Activated CD4-positive, alpha-beta T cell treated with anti-CD3 and anti-CD28 coated beads for 36 hours (primary cell): ENCODE measurements at regions of chr1 and their contacts with region 1.

Region 1: GRCh38 chr1:27044613-27045151 is 32.0 kb upstream of the TENT5B start:
- DNase-seq: peak; percentile 94
- ATAC-seq: peak; percentile 89
- H3K4me3 Mint-ChIP-seq: peak overlapping the region; percentile 65
- H3K27ac Mint-ChIP-seq: peak overlapping the region; percentile 60
- H3K4me1 Mint-ChIP-seq: peaks cover 20% of the 10 kb centered on the region
- H3K27me3 Mint-ChIP-seq: no peaks in the 10 kb centered on the region

Region 2: DNA sequence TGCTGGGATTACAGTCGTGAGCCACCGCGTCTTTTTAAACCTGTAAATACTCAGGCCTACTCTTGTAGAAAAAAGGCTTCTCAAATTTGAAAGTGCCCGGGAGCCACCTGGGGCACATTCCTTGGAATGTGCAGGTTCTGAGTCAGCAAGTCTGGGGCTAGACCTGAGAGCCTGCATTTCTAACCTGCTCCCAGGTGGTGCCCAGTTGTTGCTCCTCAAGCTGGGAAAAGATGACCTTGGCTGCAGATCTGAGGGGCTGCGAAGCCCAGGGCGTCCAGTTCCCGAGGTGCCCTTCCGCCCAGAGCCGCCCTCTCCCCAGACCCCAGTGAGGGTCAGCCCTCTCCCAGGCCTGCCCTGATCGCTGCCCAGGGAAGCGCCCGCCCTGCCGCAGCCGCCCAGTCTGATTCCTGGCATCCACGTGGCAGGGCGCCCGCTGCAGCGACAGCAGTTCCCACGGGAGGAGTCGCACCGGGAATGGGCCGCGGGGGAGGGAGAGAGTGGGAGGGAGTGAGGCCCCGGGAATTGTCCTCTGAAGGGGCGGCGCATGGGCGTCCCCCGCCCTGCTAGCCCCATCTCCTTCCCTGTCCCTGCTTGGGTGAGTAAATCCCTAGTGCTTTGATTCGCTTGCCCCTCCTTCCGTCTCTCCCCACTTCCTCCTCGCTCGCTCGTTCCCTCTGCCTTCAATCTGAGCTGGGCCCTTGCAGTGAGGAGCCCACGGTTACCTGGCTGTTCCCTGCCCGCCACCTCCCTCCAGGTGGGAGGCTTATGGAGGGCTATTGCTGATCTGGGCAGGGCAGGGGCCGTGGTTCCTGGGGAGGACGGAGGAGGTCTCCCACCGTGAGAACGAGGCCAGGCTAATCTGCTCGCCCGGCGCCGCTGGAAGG is 13.2 kb before region 1 on chr1:
- CTCF ChIA-PET with region 1: interaction called, 12 read pairs
- POLR2A ChIA-PET with region 1: no interaction called
- intact Hi-C with region 1: no loop called
- DNase-seq: no peak
- ATAC-seq: no peak
- H3K4me3 Mint-ChIP-seq: no peak overlapping the region
- H3K27ac Mint-ChIP-seq: no peak overlapping the region
- H3K4me1 Mint-ChIP-seq: no peaks in the 10 kb centered on the region
- H3K27me3 Mint-ChIP-seq: peaks cover 4% of the 10 kb centered on the region

Region 3: GRCh38 chr1:27077968-27078367 is 33.3 kb after region 1 on chr1:
- CTCF ChIA-PET with region 1: interaction called, 16 read pairs
- POLR2A ChIA-PET with region 1: no interaction called
- intact Hi-C with region 1: no loop called
- DNase-seq: no peak
- ATAC-seq: no peak
- H3K4me3 Mint-ChIP-seq: no peak overlapping the region
- H3K27ac Mint-ChIP-seq: no peak overlapping the region
- H3K4me1 Mint-ChIP-seq: no peaks in the 10 kb centered on the region
- H3K27me3 Mint-ChIP-seq: no peaks in the 10 kb centered on the region

Region 4: GRCh38 chr1:27102707-27103491 is 58.2 kb after region 1 on chr1:
- CTCF ChIA-PET with region 1: interaction called, 209 read pairs
- POLR2A ChIA-PET with region 1: no interaction called
- intact Hi-C with region 1: no loop called
- DNase-seq: peak; percentile 89
- ATAC-seq: peak; percentile 75
- H3K4me3 Mint-ChIP-seq: no peak overlapping the region
- H3K27ac Mint-ChIP-seq: no peak overlapping the region
- H3K4me1 Mint-ChIP-seq: peaks cover 23% of the 10 kb centered on the region
- H3K27me3 Mint-ChIP-seq: no peaks in the 10 kb centered on the region

Region 5: DNA sequence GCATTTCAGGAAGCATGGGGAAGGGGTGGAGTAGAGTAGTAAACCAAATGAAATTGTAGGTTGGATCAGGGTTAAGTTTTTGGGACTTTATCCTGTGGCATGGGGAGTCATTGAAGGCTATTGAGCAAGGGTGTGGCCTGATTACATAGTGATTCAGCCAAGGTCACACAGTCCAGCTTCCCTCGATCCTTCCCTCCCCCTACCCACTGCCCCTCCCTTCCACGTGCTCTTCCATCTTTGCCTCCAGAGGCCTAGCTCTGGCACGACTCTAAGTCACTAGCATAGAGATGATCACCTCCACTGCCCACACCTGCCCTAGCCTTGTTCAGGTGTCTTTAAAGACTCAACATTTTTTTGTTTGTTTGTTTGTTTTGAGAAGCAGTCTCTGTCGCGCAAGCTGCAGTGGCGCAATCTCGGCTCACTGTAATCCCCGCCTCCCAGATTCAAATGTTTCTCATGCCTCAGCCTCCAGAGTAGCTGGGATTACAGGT is 147.4 kb after region 1 on chr1:
- CTCF ChIA-PET with region 1: interaction called, 8 read pairs
- POLR2A ChIA-PET with region 1: no interaction called
- intact Hi-C with region 1: loop called in 1 of 2 experiments (anchors 10 kb)
- DNase-seq: no peak
- ATAC-seq: no peak
- H3K4me3 Mint-ChIP-seq: no peak overlapping the region
- H3K27ac Mint-ChIP-seq: no peak overlapping the region
- H3K4me1 Mint-ChIP-seq: no peaks in the 10 kb centered on the region
- H3K27me3 Mint-ChIP-seq: no peaks in the 10 kb centered on the region

Region 6: DNA sequence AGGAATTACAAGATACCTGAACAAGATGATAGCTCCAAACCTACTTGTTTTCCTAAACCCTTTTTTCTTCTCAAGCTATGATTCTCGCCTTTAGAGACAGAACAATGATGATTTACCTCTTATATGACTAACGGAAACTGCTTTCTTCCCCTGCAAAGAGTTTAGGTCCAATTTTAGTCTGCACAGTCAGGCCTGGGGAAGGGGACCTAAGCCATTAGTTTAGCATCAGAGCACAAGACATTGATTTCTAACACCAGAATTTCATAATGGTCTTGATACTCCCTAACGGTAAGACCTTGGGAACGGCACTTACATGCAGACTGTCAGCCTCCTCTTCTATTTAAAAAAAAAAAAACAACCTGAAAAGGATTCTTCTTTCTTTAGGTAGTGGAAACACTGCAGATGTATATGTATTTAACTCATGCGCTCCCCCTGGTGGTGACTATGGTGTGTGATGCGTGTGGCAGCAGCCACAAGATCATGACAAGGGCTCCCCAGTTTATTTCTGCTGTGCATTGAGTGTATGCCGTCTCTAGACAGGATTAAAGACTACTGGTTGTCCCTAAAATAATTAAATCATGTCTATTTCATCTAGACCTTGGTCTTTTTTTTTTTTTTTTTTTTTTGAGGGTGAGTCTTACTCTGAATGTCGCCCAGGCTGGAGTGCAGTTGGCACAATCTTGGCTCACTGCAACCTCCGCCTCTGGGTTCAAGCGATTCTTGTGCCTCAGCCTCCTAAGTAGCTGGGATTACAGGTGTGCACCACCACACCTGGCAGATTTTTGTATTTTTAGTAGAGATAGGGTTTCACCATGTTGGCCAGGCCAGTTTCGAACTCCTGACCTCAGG is 240.0 kb after region 1 on chr1:
- CTCF ChIA-PET with region 1: interaction called, 18 read pairs
- POLR2A ChIA-PET with region 1: no interaction called
- intact Hi-C with region 1: loop called (anchors 1 to 2 kb)
- DNase-seq: peak; percentile 95
- ATAC-seq: peak; percentile 93
- H3K4me3 Mint-ChIP-seq: no peak overlapping the region
- H3K27ac Mint-ChIP-seq: peak overlapping the region; percentile 37
- H3K4me1 Mint-ChIP-seq: peaks cover 2% of the 10 kb centered on the region
- H3K27me3 Mint-ChIP-seq: no peaks in the 10 kb centered on the region